ENCODE measurements at regions of chr18 and their contacts with region 1.

Region 1: GRCh38 chr18:11818486-11819203 is 32.6 kb upstream of the CHMP1B start:
- DNase-seq: no peak
- ATAC-seq: no peak
- H3K4me3 ChIP-seq: no peak overlapping the region
- H3K27ac ChIP-seq: no peak overlapping the region
- H3K4me1 ChIP-seq: no peaks in the 10 kb centered on the region
- H3K27me3 ChIP-seq: no peaks in the 10 kb centered on the region
- CTCF ChIP-seq: no peak

Region 2: DNA sequence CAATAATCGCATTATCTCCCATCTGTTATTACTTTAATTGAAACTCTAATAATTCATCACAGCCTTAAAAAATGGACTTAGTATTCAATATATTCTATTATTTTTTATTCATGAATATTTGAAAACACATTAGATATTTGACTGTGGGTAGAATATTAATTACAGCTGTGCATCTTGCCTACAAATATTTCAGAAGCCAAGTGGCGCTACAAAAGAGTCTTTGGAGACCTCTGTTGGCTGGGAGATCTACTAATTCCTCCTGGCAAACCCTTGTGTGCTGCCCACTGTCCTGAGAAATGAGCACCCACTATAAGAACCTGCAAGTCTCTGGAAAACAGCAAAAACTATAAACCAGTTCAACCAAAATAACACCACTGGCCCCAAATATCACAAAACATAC is 643.6 kb after region 1 on chr18:
- CTCF ChIA-PET with region 1: no interaction called
- POLR2A ChIA-PET with region 1: interaction called, 12 read pairs
- in situ Hi-C with region 1: no loop called
- intact Hi-C with region 1: no loop called
- DNase-seq: no peak
- ATAC-seq: no peak
- H3K4me3 ChIP-seq: no peak overlapping the region
- H3K27ac ChIP-seq: no peak overlapping the region
- H3K4me1 ChIP-seq: no peaks in the 10 kb centered on the region
- H3K27me3 ChIP-seq: no peaks in the 10 kb centered on the region
- CTCF ChIP-seq: no peak

Measured in Panc1 (cell line).